Tibial artery (tissue), 4 donors: ENCODE measurements at regions of chr12 and their contacts with region 1.

Region 1: DNA sequence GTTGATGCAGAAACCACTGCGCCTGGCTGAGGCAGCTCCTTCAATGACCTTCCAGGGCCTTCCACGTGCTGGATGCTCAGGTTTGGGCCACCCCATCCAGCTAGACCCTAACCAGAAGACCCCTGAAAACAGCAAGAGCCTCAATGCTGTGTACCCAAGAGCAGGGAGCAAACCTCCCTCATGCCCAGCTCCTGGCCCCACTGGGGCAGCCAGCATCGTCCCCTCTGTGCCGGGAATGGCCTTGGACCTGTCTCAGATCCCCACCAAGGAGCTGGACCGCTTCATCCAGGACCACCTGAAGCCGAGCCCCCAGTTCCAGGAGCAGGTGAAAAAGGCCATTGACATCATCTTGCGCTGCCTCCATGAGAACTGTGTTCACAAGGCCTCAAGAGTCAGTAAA is 10.5 kb downstream of the OAS3 start:
- DNase-seq: no peak
- H3K4me3 ChIP-seq: no peak overlapping the region
- H3K27ac ChIP-seq: no peak overlapping the region
- H3K4me1 ChIP-seq: no peaks in the 10 kb centered on the region
- H3K27me3 ChIP-seq: no peaks in the 10 kb centered on the region
- CTCF ChIP-seq: no peak

Region 2: GRCh38 chr12:112879191-112879705 is 69.6 kb before region 1 on chr12:
- intact Hi-C with region 1: loop called (anchors 2 kb)
- DNase-seq: no peak
- H3K4me3 ChIP-seq: no peak overlapping the region
- H3K27ac ChIP-seq: no peak overlapping the region
- H3K4me1 ChIP-seq: no peaks in the 10 kb centered on the region
- H3K27me3 ChIP-seq: peaks cover 0 to 57% of the 10 kb centered on the region in 2 donors
- CTCF ChIP-seq: no peak